MCF 10A (cell line): ENCODE measurements at regions of chr16 and their contacts with region 1.

Region 1: DNA sequence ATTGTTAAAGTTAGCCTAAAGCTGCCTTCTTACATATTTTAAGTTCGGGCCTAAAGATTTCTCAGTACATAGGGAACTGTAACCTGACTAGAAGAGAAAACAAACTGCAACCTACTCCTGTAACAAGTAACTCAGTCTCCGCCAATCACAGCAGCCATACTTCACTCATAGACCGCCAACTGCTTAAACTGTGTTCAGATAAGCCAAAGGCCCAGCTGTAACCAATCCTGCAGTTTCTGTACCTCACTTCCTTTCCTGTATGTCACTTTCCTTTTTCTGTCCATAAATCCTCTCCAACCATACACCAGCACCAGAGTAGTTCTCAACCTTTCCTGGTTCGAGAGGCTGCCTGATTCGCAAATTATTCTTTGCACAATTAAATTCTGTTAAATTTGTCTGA is 41.5 kb downstream of the GLG1 start:
- DNase-seq: no peak
- H3K4me3 Mint-ChIP-seq: no peak overlapping the region
- H3K27ac Mint-ChIP-seq: no peak overlapping the region
- H3K4me1 Mint-ChIP-seq: peaks cover 16% of the 10 kb centered on the region
- H3K27me3 Mint-ChIP-seq: no peaks in the 10 kb centered on the region
- CTCF ChIP-seq: no peak

Region 2: GRCh38 chr16:74281300-74281699 is 284.1 kb before region 1 on chr16:
- CTCF ChIA-PET with region 1: no interaction called
- POLR2A ChIA-PET with region 1: no interaction called
- intact Hi-C with region 1: no loop called
- DNase-seq: no peak
- H3K4me3 Mint-ChIP-seq: no peak overlapping the region
- H3K27ac Mint-ChIP-seq: no peak overlapping the region
- H3K4me1 Mint-ChIP-seq: no peaks in the 10 kb centered on the region
- H3K27me3 Mint-ChIP-seq: peaks cover 12% of the 10 kb centered on the region
- CTCF ChIP-seq: no peak

Region 3: GRCh38 chr16:74577882-74578366 is 12.5 kb after region 1 on chr16:
- CTCF ChIA-PET with region 1: interaction called, 6 read pairs
- POLR2A ChIA-PET with region 1: interaction called, 11 read pairs
- intact Hi-C with region 1: no loop called
- DNase-seq: peak; percentile 52
- H3K4me3 Mint-ChIP-seq: no peak overlapping the region
- H3K27ac Mint-ChIP-seq: peak overlapping the region; percentile 25
- H3K4me1 Mint-ChIP-seq: peaks cover 15% of the 10 kb centered on the region
- H3K27me3 Mint-ChIP-seq: no peaks in the 10 kb centered on the region
- CTCF ChIP-seq: no peak